Endothelial cell of umbilical vein (primary cell): ENCODE measurements at regions of chr6 and their contacts with region 1.

Region 1: DNA sequence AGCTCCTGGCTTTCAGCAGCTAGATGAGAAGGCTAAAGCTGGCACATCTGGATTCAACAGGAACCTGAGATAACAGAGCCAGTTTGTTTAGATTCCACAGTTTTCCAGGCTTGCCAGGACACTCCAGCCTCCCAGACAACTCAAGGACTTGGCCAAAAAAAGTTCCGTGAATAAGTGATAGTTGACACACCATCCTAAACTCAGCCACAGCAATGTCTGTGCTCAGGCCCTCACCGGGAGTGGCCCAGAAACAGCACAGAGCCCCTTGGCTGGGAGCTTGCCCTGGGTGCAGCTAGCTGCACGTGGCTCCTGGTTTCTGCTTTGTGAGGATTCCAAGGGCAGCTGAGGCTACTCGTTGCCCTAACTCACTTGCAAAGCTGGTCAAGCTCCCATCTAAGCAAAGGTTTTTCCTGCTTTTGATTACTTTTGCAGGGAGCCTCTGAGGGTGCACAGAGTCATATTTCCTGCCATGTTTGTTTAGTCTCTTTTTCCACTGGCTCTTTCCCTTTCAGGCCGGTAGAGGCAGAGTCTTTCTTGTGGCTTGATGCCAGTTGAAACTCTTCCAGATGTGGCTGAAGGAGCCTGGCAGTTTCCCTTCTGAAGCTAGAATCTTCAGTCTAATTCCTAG is 118.3 kb upstream of the ECI2 start:
- DNase-seq: peak; percentile 96
- H3K4me3 ChIP-seq: no peak overlapping the region
- H3K27ac ChIP-seq: peak overlapping the region; percentile 60
- H3K4me1 ChIP-seq: peaks cover 50% of the 10 kb centered on the region
- H3K27me3 ChIP-seq: no peaks in the 10 kb centered on the region
- CTCF ChIP-seq: peak; percentile 72 to 75
- POLR2A ChIP-seq: peak; percentile 25

Region 2: DNA sequence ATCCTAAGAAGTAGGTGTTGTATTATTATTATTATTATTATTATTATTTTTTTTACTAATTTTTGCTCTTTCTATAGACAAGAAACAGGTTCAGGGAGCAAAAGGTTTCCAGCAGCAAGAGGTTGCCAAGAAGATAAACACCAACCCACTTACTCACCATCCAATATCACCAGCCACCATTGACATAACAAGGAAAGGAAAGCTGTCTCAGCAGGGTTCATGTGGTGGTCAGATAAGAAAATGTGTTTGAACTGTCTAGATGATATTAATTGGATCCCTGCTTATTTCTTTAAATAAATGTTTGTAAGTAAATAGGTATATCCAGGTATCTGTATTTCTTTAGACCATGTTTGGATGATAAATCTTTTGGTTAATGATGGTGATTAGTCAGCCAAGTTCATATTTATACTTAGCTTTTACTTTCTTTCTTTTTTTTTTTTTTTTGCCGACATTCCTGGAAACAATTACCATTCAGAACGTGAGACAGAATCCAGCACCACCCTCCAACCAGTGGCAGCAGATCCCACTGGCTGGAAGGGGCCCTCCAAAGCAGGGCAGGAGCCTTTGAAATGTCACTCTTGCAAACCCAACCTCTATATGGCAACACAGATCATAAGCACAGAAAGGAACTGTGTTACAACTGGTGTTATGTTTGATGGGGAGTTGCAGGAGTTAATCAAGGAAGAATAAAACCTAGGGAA is 20.8 kb after region 1 on chr6:
- CTCF ChIA-PET with region 1: interaction called, 19 read pairs
- POLR2A ChIA-PET with region 1: interaction called, 7 read pairs
- dilution Hi-C with region 1: no loop called
- intact Hi-C with region 1: loop called (anchors 2 kb)
- DNase-seq: peak; percentile 93
- H3K4me3 ChIP-seq: no peak overlapping the region
- H3K27ac ChIP-seq: no peak overlapping the region
- H3K4me1 ChIP-seq: peaks cover 19% of the 10 kb centered on the region
- H3K27me3 ChIP-seq: no peaks in the 10 kb centered on the region
- CTCF ChIP-seq: no peak
- POLR2A ChIP-seq: no peak

Region 3: GRCh38 chr6:4351520-4352315 is 98.0 kb after region 1 on chr6:
- CTCF ChIA-PET with region 1: interaction called, 4 read pairs
- POLR2A ChIA-PET with region 1: no interaction called
- dilution Hi-C with region 1: no loop called
- intact Hi-C with region 1: loop called (anchors 5 kb)
- DNase-seq: peak; percentile 69
- H3K4me3 ChIP-seq: no peak overlapping the region
- H3K27ac ChIP-seq: peak overlapping the region; percentile 35
- H3K4me1 ChIP-seq: peaks cover 24% of the 10 kb centered on the region
- H3K27me3 ChIP-seq: no peaks in the 10 kb centered on the region
- CTCF ChIP-seq: no peak
- POLR2A ChIP-seq: no peak

Region 4: DNA sequence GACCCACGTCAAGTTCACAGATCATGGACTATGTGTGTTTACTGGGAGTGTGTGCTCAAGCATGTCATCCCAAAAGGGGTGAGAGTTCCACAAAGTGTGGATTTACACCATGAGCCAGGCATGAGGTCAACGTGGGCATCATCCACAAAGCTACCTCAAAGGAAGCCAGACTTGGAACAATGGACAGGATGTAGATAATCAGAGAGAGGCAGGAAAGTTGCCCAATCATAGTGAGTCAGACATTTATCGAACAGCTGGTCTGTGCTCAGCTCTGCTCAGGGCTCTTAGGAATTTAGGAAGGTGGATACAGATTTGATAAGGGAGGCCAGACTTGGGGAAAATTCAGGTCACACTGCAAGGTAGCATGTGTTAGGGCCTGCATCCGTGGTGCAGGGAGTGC is 205.3 kb after region 1 on chr6:
- CTCF ChIA-PET with region 1: no interaction called
- POLR2A ChIA-PET with region 1: no interaction called
- dilution Hi-C with region 1: no loop called
- intact Hi-C with region 1: loop called (anchors 5 kb)
- DNase-seq: peak; percentile 89
- H3K4me3 ChIP-seq: no peak overlapping the region
- H3K27ac ChIP-seq: peak overlapping the region; percentile 78
- H3K4me1 ChIP-seq: peaks cover 12% of the 10 kb centered on the region
- H3K27me3 ChIP-seq: no peaks in the 10 kb centered on the region
- CTCF ChIP-seq: no peak
- POLR2A ChIP-seq: no peak